AG04450 (cell line): ENCODE measurements at regions of chr1 and their contacts with region 1.

Region 1: DNA sequence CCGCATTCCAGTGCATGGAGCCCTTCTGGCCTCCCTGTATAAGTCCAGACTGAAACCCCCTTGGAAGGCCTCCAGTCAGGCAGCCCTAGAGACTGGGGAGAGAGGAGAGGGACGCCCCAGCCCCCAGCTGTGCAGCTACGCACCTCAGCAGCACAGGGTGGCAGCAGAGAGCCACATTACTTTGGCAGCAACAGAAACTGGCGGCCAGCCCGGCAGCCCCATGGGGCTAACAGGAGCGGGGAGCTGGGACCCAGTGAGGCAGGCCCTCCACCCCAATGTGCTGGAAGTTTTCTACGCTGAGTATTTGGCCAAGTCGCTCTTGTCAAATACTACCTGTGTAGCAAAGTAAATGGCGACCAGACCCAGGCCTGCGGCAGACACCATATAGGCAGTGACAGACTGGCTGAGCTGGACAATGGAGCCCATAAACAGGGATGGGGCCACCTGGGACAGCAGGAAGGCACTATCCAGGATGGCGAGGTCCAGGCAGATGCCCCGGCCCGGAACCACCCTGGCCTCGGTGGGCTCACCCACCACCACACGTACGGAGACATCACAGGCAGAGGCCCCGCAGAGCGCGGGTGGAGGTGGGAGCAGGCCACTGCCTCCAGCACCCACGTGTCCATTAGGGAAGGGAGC is 21.2 kb downstream of the SLC45A3 start:
- DNase-seq: no peak
- H3K4me3 ChIP-seq: no peak overlapping the region
- H3K27ac ChIP-seq: no peak overlapping the region
- H3K27me3 ChIP-seq: no peaks in the 10 kb centered on the region
- CTCF ChIP-seq: peak; percentile 88

Region 2: DNA sequence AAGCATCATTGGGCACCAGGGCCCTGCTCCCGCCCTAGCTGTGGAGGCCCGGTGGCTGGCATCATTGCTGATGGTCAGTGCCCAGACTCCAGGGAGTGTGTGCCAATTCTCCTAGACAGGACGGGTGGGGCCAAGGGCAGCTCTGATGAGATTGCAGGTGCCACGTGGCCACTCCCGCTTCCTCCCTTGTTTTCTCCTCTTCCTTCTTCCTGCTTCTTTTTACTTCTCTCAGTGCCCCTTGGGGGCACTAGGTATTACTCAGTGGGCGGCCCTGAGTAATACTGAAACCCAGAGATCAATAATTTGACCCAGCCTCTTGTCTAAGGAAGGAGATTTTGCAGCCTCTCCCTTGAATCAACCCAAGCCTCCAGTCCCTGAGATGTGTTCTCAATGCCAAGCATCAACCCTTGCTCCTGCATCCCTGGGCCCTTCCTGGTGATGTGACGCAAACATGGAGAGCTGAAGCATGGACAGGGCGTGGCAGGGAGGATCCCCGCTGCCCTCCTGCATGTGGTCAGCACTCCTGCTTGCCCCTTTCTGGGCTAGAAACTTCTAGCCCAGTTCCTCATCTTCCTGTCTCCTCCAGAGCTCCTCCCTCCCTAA is 122.2 kb before region 1 on chr1:
- CTCF ChIA-PET with region 1: interaction called, 169 read pairs
- POLR2A ChIA-PET with region 1: no interaction called
- DNase-seq: no peak
- H3K4me3 ChIP-seq: no peak overlapping the region
- H3K27ac ChIP-seq: no peak overlapping the region
- H3K27me3 ChIP-seq: peaks cover 20% of the 10 kb centered on the region
- CTCF ChIP-seq: no peak

Region 3: GRCh38 chr1:205610036-205610435 is 49.0 kb before region 1 on chr1:
- CTCF ChIA-PET with region 1: interaction called, 12 read pairs
- POLR2A ChIA-PET with region 1: no interaction called
- DNase-seq: no peak
- H3K4me3 ChIP-seq: no peak overlapping the region
- H3K27ac ChIP-seq: no peak overlapping the region
- H3K27me3 ChIP-seq: no peaks in the 10 kb centered on the region
- CTCF ChIP-seq: no peak

Region 4: GRCh38 chr1:205680073-205680851 is 21.2 kb after region 1 on chr1 and contains the start of gene SLC45A3:
- CTCF ChIA-PET with region 1: interaction called, 66 read pairs
- POLR2A ChIA-PET with region 1: no interaction called
- DNase-seq: no peak
- H3K4me3 ChIP-seq: peak within 1 kb of the TSS; percentile 68
- H3K27ac ChIP-seq: peak within 1 kb of the TSS; percentile 31
- H3K27me3 ChIP-seq: peaks cover 4% of the 10 kb centered on the region
- CTCF ChIP-seq: no peak
- polyA plus RNA-seq, gene SLC45A3: 1.7 and 1.8 TPM in 2 replicates

Region 5: DNA sequence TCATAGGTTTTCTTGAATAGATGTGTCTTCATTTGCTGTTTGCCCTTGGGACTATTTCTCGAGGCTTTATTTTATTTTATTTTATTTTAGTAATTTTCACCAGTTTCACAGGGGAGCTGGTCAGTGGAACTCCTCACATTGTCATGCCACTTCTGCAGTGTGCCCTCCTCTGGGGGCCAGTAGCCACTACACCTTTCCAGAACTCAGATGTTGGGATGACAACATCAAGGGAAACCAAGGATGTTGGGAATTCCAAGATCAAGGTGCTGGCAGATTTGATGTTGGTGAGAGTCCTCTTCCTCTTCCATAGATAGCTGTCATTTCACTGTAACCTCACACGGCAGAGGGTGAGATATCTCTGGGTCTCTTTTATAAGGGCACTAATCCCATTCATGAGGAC is 248.7 kb after region 1 on chr1:
- CTCF ChIA-PET with region 1: interaction called, 18 read pairs
- POLR2A ChIA-PET with region 1: no interaction called
- DNase-seq: no peak
- H3K4me3 ChIP-seq: no peak overlapping the region
- H3K27ac ChIP-seq: no peak overlapping the region
- H3K27me3 ChIP-seq: peaks cover 8% of the 10 kb centered on the region
- CTCF ChIP-seq: peak; percentile 67